CD4-positive, alpha-beta memory T cell (primary cell): ENCODE measurements at regions of chr14 and their contacts with region 1.

Region 1: DNA sequence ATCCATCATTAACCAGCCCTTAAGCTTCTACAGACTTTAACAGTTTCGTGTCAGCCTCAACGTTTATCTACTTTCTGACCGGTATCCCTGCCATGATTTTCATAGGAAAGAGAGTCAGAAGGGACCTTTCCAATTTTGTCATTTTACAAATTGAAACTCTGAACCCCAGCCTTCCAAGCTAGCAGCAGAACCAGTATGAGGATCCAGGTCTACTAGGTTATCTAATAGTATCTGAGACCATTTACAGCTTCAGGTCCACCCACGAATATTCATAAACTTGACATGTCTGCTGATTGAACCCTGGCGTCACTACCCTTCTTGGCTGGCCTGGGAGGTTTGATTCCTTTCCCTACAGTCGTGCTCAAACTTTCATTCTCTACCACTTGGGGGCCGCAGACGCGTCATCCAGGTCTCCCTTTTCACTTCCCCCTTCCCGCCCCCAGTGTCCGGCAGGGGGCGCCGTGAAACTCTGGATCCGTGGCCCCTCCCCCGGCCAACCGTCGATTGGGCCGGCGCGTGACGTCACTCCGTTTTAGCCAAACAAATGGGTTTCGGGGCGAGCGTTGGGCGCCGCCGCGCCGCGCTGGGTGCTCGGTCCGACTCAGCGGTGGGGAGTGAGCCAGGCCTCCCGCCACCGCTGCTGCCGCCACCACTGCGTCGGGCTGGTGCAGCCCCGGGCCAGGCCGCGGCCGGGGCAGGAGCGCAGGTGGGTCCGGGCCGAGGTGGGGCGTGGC is at the start of gene FBXO34:
- DNase-seq: peak; percentile 97 to 100 (median 98)
- H3K4me3 ChIP-seq: peak within 1 kb of the TSS; percentile 76 to 90
- H3K4me3 Mint-ChIP-seq: peak within 1 kb of the TSS; percentile 89 to 95 (median 92)
- H3K27ac ChIP-seq: peak within 1 kb of the TSS; percentile 91
- H3K27ac Mint-ChIP-seq: peak within 1 kb of the TSS; percentile 93 to 96 (median 95)
- H3K4me1 ChIP-seq: peaks cover 41% of the 10 kb centered on the region
- H3K4me1 Mint-ChIP-seq: peaks cover 31 to 48% (median 36%) of the 10 kb centered on the region in 4 donors
- H3K27me3 ChIP-seq: no peaks in the 10 kb centered on the region
- H3K27me3 Mint-ChIP-seq: no peaks in the 10 kb centered on the region
- total RNA-seq, gene FBXO34: 42.1 to 43.6 TPM

Region 2: DNA sequence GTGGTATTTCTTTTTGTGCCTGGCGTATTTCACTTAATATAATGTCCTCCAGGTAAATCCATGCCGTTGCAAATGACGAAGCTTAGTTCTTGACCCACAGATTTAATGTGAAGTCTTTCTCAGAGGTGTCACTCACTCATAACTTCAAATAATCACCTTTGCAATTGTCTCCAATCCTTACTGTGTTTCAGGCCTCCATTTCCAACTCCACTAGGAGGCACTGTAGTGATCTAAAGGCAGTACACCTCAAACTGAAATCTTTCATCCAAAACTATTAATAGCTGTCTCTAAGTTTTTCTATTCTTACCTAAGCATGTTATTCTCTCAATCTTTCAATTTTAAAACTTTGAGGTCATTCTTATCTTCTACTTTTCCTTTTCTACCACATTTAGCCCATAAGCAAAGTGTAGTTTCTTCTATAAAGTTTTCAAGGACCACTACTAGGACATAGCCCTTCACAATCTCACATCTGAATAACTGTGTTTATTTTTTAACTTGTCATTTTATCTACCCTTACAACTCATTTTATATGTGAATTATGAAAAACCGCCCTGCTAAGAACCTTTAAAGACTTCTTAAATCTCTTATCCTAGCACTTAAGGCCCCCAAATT is 25.2 kb before region 1 on chr14:
- CTCF ChIA-PET with region 1: interaction called, 9 read pairs
- POLR2A ChIA-PET with region 1: no interaction called
- intact Hi-C with region 1: loop called (anchors 1 kb)
- DNase-seq: peak; percentile 43 to 61 (median 48)
- H3K4me3 ChIP-seq: no peak overlapping the region
- H3K4me3 Mint-ChIP-seq: no peak overlapping the region
- H3K27ac ChIP-seq: no peak overlapping the region
- H3K27ac Mint-ChIP-seq: peak overlapping the region in 1 of 7 donors; percentile 50
- H3K4me1 ChIP-seq: no peaks in the 10 kb centered on the region
- H3K4me1 Mint-ChIP-seq: peaks cover 0 to 1% (median 0%) of the 10 kb centered on the region in 4 donors
- H3K27me3 ChIP-seq: no peaks in the 10 kb centered on the region
- H3K27me3 Mint-ChIP-seq: peaks cover 8% of the 10 kb centered on the region in 2 donors

Region 3: DNA sequence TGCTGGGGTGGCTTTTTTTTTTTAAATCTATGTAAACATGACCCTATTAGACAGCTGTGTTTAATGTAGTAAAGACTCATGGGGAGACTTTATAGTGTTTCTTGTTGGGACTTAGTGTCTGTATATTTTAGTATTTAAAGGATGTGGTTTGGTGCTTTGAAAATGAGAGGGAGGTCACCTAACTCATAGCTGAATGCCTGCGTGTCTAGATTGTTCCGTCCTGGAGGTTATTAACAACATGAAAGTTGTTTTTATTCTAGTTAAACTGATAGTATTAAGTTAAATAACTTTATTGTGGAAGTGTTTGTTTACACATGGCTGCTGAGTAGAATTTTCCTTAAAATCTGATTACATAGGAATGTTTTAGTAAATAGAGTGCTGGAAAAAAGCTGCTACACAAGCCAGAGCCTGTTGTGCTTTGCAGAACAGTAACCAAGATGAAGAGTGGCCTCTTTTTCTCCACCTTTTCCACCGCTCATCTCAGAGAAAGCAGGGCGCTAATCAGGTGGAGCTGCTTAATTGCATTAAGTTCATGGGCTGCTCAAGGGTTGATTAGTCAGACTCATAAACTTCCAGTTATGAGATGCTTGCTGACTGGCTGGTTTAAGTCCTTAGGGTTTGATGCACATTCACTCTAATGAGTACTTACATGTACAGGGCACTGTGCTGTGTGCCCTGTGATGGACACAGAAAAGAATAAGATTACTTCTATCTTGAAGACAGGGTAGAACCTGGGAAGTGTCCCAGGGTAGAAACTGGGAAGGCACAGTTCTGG is 62.9 kb after region 1 on chr14:
- CTCF ChIA-PET with region 1: interaction called, 92 read pairs
- POLR2A ChIA-PET with region 1: interaction called, 43 read pairs
- intact Hi-C with region 1: loop called (anchors 1 kb)
- DNase-seq: peak in 4 of 5 donors; percentile 37 to 56 (median 40)
- H3K4me3 ChIP-seq: peak overlapping the region; percentile 11 to 37
- H3K4me3 Mint-ChIP-seq: peak overlapping the region; percentile 81 to 93 (median 89)
- H3K27ac ChIP-seq: peak overlapping the region; percentile 67
- H3K27ac Mint-ChIP-seq: peak overlapping the region; percentile 86 to 97 (median 94)
- H3K4me1 ChIP-seq: peaks cover 84% of the 10 kb centered on the region
- H3K4me1 Mint-ChIP-seq: peaks cover 60 to 90% (median 74%) of the 10 kb centered on the region in 4 donors
- H3K27me3 ChIP-seq: no peaks in the 10 kb centered on the region
- H3K27me3 Mint-ChIP-seq: no peaks in the 10 kb centered on the region

Region 4: GRCh38 chr14:55386031-55386808 is 115.2 kb after region 1 on chr14:
- CTCF ChIA-PET with region 1: interaction called, 10 read pairs
- POLR2A ChIA-PET with region 1: interaction called, 3 read pairs
- intact Hi-C with region 1: no loop called
- DNase-seq: peak in 4 of 5 donors; percentile 13 to 39 (median 16)
- H3K4me3 ChIP-seq: peak overlapping the region in 1 of 2 donors; percentile 23
- H3K4me3 Mint-ChIP-seq: peak overlapping the region; percentile 56 to 86 (median 84)
- H3K27ac ChIP-seq: peak overlapping the region; percentile 59
- H3K27ac Mint-ChIP-seq: peak overlapping the region; percentile 83 to 98 (median 93)
- H3K4me1 ChIP-seq: peaks cover 19% of the 10 kb centered on the region
- H3K4me1 Mint-ChIP-seq: peaks cover 24 to 39% (median 25%) of the 10 kb centered on the region in 4 donors
- H3K27me3 ChIP-seq: no peaks in the 10 kb centered on the region
- H3K27me3 Mint-ChIP-seq: no peaks in the 10 kb centered on the region

Region 5: GRCh38 chr14:55430024-55430690 is 159.2 kb after region 1 on chr14:
- CTCF ChIA-PET with region 1: interaction called, 30 read pairs
- POLR2A ChIA-PET with region 1: interaction called, 3 read pairs
- intact Hi-C with region 1: loop called (anchors 1 kb)
- DNase-seq: peak; percentile 65 to 79 (median 73)
- H3K4me3 ChIP-seq: no peak overlapping the region
- H3K4me3 Mint-ChIP-seq: peak overlapping the region in 1 of 8 donors; percentile 43
- H3K27ac ChIP-seq: no peak overlapping the region
- H3K27ac Mint-ChIP-seq: peak overlapping the region in 6 of 7 donors; percentile 39 to 91 (median 72)
- H3K4me1 ChIP-seq: peaks cover 32% of the 10 kb centered on the region
- H3K4me1 Mint-ChIP-seq: peaks cover 32 to 40% (median 34%) of the 10 kb centered on the region in 4 donors
- H3K27me3 ChIP-seq: no peaks in the 10 kb centered on the region
- H3K27me3 Mint-ChIP-seq: no peaks in the 10 kb centered on the region

Region 6: GRCh38 chr14:55470025-55470424 is 199.0 kb after region 1 on chr14:
- CTCF ChIA-PET with region 1: no interaction called
- POLR2A ChIA-PET with region 1: no interaction called
- intact Hi-C with region 1: no loop called
- DNase-seq: no peak
- H3K4me3 ChIP-seq: no peak overlapping the region
- H3K4me3 Mint-ChIP-seq: no peak overlapping the region
- H3K27ac ChIP-seq: no peak overlapping the region
- H3K27ac Mint-ChIP-seq: no peak overlapping the region
- H3K4me1 ChIP-seq: no peaks in the 10 kb centered on the region
- H3K4me1 Mint-ChIP-seq: no peaks in the 10 kb centered on the region
- H3K27me3 ChIP-seq: no peaks in the 10 kb centered on the region
- H3K27me3 Mint-ChIP-seq: peaks cover 0 to 3% of the 10 kb centered on the region in 2 donors